ENCODE measurements at regions of chr1 and their contacts with region 1.

Region 1: GRCh38 chr1:172638885-172639831 is 19.7 kb upstream of the FASLG start:
- DNase-seq: peak; percentile 76
- H3K4me3 Mint-ChIP-seq: peak overlapping the region; percentile 47
- H3K27ac Mint-ChIP-seq: peak overlapping the region; percentile 98
- H3K4me1 Mint-ChIP-seq: peaks cover 74% of the 10 kb centered on the region
- H3K27me3 Mint-ChIP-seq: peaks cover 5% of the 10 kb centered on the region

Region 2: GRCh38 chr1:172269644-172270043 is 369.5 kb before region 1 on chr1:
- intact Hi-C with region 1: loop called (anchors 1 kb)
- DNase-seq: no peak
- H3K4me3 Mint-ChIP-seq: no peak overlapping the region
- H3K27ac Mint-ChIP-seq: peak overlapping the region; percentile 67
- H3K4me1 Mint-ChIP-seq: peaks cover 64% of the 10 kb centered on the region
- H3K27me3 Mint-ChIP-seq: no peaks in the 10 kb centered on the region

Region 3: GRCh38 chr1:172532700-172533509 is 106.3 kb before region 1 on chr1 and contains the start of gene SUCO:
- intact Hi-C with region 1: loop called (anchors 1 kb)
- DNase-seq: peak; percentile 100
- H3K4me3 Mint-ChIP-seq: peak within 1 kb of the TSS; percentile 95
- H3K27ac Mint-ChIP-seq: peak within 1 kb of the TSS; percentile 99
- H3K4me1 Mint-ChIP-seq: peaks cover 38% of the 10 kb centered on the region
- H3K27me3 Mint-ChIP-seq: peaks cover 9% of the 10 kb centered on the region
- total RNA-seq, gene SUCO: 28.2 and 33.3 TPM in 2 replicates

Region 4: GRCh38 chr1:172670791-172671190 is 31.6 kb after region 1 on chr1:
- intact Hi-C with region 1: loop called (anchors 1 kb)
- DNase-seq: no peak
- H3K4me3 Mint-ChIP-seq: no peak overlapping the region
- H3K27ac Mint-ChIP-seq: peak overlapping the region; percentile 61
- H3K4me1 Mint-ChIP-seq: peaks cover 77% of the 10 kb centered on the region
- H3K27me3 Mint-ChIP-seq: no peaks in the 10 kb centered on the region

Region 5: GRCh38 chr1:172719694-172720138 is 80.6 kb after region 1 on chr1:
- intact Hi-C with region 1: no loop called
- DNase-seq: no peak
- H3K4me3 Mint-ChIP-seq: no peak overlapping the region
- H3K27ac Mint-ChIP-seq: no peak overlapping the region
- H3K4me1 Mint-ChIP-seq: peaks cover 47% of the 10 kb centered on the region
- H3K27me3 Mint-ChIP-seq: no peaks in the 10 kb centered on the region

Region 6: GRCh38 chr1:172818841-172819527 is 179.8 kb after region 1 on chr1:
- intact Hi-C with region 1: loop called (anchors 2 kb)
- DNase-seq: peak; percentile 33
- H3K4me3 Mint-ChIP-seq: peak overlapping the region; percentile 46
- H3K27ac Mint-ChIP-seq: peak overlapping the region; percentile 67
- H3K4me1 Mint-ChIP-seq: peaks cover 45% of the 10 kb centered on the region
- H3K27me3 Mint-ChIP-seq: peaks cover 15% of the 10 kb centered on the region

Region 7: DNA sequence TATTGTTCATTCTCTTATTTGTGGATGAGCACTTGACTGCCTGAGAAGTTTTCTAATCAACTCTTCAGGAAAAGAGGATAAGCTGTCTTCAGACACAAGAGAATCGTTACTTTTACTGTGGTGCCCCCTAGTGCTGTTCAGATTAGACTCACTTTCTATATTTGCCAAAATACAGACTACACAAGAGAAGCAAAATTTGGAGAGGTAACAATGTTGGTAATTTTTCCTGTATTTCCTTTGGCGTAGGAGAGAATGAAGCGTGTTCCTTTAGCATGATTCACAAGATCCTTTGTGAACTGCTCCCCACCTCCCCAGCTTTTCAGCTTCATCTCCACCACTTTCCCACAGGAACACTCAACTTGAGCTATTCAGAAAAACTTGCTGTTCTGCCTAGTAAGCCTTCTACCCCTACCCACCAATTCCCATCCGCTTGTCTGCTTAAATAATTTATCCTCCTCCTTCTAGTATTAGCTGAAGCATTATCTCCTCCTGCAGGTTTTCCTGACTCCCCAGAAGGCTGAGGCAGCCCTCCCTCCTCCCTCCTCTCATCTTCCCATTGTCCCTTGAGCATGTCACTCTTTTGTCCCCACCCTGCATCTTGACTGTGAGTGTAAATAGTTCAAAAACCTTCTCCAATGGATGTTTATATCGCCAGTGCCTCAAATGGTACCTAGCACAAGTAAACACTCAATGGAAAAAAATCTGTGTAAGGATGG is 563.4 kb after region 1 on chr1:
- intact Hi-C with region 1: loop called (anchors 10 kb)
- DNase-seq: no peak
- H3K4me3 Mint-ChIP-seq: no peak overlapping the region
- H3K27ac Mint-ChIP-seq: no peak overlapping the region
- H3K4me1 Mint-ChIP-seq: peaks cover 31% of the 10 kb centered on the region
- H3K27me3 Mint-ChIP-seq: peaks cover 49% of the 10 kb centered on the region